AG04449 (cell line): ENCODE measurements at regions of chr6 and their contacts with region 1.

Region 1: DNA sequence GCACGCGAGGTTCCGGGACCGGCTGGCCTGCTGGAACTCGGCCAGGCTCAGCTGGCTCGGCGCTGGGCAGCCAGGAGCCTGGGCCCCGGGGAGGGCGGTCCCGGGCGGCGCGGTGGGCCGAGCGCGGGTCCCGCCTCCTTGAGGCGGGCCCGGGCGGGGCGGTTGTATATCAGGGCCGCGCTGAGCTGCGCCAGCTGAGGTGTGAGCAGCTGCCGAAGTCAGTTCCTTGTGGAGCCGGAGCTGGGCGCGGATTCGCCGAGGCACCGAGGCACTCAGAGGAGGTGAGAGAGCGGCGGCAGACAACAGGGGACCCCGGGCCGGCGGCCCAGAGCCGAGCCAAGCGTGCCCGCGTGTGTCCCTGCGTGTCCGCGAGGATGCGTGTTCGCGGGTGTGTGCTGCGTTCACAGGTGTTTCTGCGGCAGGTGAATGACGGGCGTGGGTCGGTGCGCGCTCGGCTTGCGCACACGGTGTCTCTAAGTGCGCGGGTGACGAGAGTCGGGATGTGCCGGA is at the start of gene CDKN1A:
- DNase-seq: no peak
- H3K4me3 ChIP-seq: peak within 1 kb of the TSS; percentile 91
- CTCF ChIP-seq: no peak

Region 2: DNA sequence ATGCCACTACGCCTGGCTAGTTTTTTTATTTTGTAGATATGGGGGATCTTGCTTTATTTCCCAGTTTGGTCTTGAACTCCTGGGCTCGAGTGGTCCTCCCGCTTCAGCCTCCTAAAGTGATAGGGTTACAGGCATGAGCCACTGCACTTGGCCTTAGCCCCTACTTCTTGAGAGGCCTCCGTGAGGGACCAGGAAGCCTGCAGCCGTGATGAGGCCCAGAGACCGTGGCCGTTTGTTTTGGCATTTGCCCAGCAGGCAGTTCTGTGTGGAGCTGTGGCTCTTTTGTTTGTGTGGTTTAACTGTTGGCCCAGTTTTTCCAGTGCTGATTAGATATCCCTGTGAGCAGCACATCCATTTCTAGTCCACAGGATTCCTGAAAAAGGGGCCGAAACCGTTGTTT is 44.7 kb before region 1 on chr6:
- CTCF ChIA-PET with region 1: interaction called, 7 read pairs
- POLR2A ChIA-PET with region 1: interaction called, 12 read pairs
- DNase-seq: no peak
- H3K4me3 ChIP-seq: no peak overlapping the region
- CTCF ChIP-seq: no peak

Region 3: GRCh38 chr6:36642913-36643817 is 35.4 kb before region 1 on chr6:
- CTCF ChIA-PET with region 1: interaction called, 4 read pairs
- POLR2A ChIA-PET with region 1: interaction called, 13 read pairs
- DNase-seq: no peak
- H3K4me3 ChIP-seq: no peak overlapping the region
- CTCF ChIP-seq: no peak

Region 4: GRCh38 chr6:36666726-36667591 is 11.6 kb before region 1 on chr6:
- CTCF ChIA-PET with region 1: interaction called, 15 read pairs
- POLR2A ChIA-PET with region 1: interaction called, 66 read pairs
- DNase-seq: peak; percentile 67
- H3K4me3 ChIP-seq: no peak overlapping the region
- CTCF ChIP-seq: no peak

Region 5: GRCh38 chr6:36692220-36692619 is 13.6 kb after region 1 on chr6:
- CTCF ChIA-PET with region 1: interaction called, 4 read pairs
- POLR2A ChIA-PET with region 1: interaction called, 24 read pairs
- DNase-seq: no peak
- H3K4me3 ChIP-seq: no peak overlapping the region
- CTCF ChIP-seq: no peak